ENCODE measurements at regions of chr2 and their contacts with region 1.

Region 1: DNA sequence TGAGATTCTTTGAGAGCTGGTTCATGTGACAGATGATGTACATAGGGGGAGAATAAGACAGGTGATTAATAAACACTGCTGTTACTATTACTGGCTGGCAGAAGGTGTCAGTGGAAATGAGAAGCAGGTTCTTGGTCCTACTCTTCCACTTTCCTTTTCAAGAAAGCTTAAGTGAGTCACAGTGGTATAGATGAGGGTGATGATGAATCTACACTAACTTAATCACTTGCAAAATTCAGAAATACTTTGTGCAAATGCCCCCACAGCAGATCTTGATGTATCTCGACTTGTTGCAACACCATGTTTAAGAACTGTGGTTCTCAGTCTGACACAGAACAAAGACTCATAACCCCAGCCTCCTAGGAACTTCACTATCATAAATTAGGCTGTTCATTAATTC is 35.9 kb upstream of the MGAT5 start:
- DNase-seq: no peak
- H3K4me3 ChIP-seq: no peak overlapping the region
- H3K27ac ChIP-seq: no peak overlapping the region
- H3K27me3 ChIP-seq: no peaks in the 10 kb centered on the region
- CTCF ChIP-seq: no peak

Region 2: GRCh38 chr2:134207564-134208209 is 10.2 kb before region 1 on chr2:
- CTCF ChIA-PET with region 1: interaction called, 18 read pairs
- POLR2A ChIA-PET with region 1: no interaction called
- DNase-seq: no peak
- H3K4me3 ChIP-seq: no peak overlapping the region
- H3K27ac ChIP-seq: no peak overlapping the region
- H3K27me3 ChIP-seq: no peaks in the 10 kb centered on the region
- CTCF ChIP-seq: peak; percentile 54

Measured in AG04450 (cell line).